ENCODE measurements at regions of chr2 and their contacts with region 1.

Region 1: DNA sequence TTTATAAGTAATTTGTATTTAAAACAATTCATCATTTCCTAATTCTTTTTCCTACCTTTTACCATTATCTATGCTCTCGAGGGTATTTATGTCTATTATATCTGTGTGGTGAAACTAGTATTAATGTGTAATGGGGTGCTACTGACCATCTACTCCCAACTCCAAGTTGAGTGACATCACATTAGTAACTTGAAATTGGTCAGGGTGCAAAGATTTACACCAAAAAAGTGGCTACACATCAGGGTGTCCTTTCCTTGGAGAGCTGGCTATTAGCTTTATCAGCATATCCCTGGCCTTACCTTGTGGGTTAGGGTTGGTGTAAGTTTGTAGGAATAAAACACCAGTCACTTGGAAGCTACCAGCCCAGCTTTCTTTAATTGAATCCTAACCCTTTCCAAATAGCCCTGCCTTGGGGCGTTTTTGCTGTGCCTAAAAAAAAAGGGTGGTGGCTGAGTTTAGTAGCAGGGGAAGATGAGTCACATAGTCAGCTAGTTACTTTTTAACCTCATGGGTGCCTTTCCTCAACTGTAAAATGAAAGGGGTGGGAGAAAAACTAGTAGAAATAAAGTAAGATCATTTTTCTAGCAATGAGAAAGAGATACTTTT is 14.0 kb downstream of the ANXA4 start:
- DNase-seq: peak; percentile 81 to 91
- H3K4me3 ChIP-seq: peak overlapping the region; percentile 27; the same call in 1 of the 2 replicates
- H3K27ac ChIP-seq: peak overlapping the region; percentile 62
- H3K4me1 ChIP-seq: peaks cover 31% of the 10 kb centered on the region
- H3K27me3 ChIP-seq: no peaks in the 10 kb centered on the region
- CTCF ChIP-seq: no peak

Region 2: DNA sequence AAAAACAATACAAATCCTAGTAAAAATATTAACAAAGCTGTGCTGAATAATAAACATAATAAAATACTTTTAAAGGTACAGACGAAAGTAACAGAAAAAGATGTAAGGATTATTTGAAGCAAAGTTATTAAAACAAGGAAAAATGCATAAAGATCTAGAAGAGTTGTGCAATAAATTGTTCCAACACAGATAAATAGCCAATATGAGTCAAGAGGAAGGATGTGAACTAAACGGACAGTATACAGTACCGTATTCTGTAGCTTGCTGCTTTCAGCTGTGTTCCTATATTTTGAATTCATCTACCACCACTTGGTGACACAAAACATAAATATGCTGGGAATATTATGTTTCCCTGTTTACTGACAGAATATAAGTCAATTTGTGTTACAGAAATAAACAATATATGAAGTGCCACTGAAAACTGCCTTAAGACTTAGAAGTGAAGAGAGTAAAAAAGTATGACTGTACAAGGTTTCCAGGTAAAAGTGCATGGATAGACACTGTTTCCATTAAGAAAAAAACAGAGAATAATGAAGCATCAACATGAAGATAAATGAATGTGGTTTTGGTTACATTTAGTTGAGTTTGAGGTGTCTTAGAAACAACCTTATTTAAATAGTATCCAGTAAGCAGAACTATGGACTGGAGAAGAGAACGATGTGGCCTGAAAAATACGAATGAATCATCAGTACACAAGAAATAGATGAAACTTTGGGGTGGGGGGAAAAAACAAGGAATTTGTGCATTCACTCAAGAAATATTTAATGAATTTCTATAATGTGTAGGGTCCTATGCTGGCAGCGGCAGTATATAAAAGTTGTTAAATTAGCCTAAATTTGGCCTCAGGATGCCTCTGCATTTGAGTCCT is 1516.8 kb before region 1 on chr2:
- CTCF ChIA-PET with region 1: no interaction called
- POLR2A ChIA-PET with region 1: no interaction called
- intact Hi-C with region 1: loop called (anchors 10 kb)
- DNase-seq: no peak
- H3K4me3 ChIP-seq: no peak overlapping the region
- H3K27ac ChIP-seq: no peak overlapping the region
- H3K4me1 ChIP-seq: 0 out of 2 replicates have a peak, but pooled peaks cover 4% of the 10 kb centered on the region
- H3K27me3 ChIP-seq: no peaks in the 10 kb centered on the region
- CTCF ChIP-seq: no peak

Region 3: GRCh38 chr2:69242651-69243051 is 513.3 kb before region 1 on chr2:
- CTCF ChIA-PET with region 1: no interaction called
- POLR2A ChIA-PET with region 1: no interaction called
- intact Hi-C with region 1: no loop called
- DNase-seq: no peak
- H3K4me3 ChIP-seq: no peak overlapping the region
- H3K27ac ChIP-seq: no peak overlapping the region
- H3K4me1 ChIP-seq: no peaks in the 10 kb centered on the region
- H3K27me3 ChIP-seq: no peaks in the 10 kb centered on the region
- CTCF ChIP-seq: no peak